Activated T-helper 1 cell treated with anti-CD3 and anti-CD28 coated beads, Interleukin-12 subunit alpha, Interleukin-12 subunit beta, Interleukin-2, Interleukin-4 antibody, amounts not matched to agents 30 ng/mL and 10 ng/mL and 1 ng/mL, durations not matched to agents 14 hours and 24 hours and 36 hours (primary cell): ENCODE measurements at regions of chr3 and their contacts with region 1.

Region 1: DNA sequence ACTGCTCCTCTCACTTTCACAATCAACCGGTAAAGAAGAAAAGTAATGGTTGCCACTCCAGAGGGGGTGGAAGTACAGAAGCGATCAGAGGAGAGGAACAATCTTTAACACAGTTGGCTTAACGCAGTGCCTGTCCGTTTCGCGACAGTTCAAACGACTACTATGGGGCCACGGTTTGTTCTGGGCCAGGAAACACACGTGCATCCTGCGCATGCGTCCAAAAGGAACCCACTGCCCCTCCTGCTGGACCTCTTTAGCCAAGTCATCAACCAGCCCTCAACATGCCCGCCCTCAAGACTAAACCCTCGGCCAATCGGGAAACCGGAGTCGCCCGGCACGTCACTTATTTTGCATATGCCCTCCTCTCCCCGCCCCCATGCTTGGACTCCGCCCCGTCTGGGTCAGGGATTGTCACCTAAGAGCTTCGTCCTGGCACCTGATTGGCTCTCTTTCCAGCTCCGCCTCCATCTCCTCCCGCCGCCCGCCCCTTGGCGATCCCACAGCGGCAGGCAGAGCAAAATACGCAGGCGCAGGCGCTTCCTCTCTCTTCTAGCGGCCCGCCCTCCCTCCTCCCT is 345 bp upstream of the CDV3 start:
- DNase-seq: peak; percentile 100
- H3K4me3 Mint-ChIP-seq: peak overlapping the region; percentile 84
- H3K27ac Mint-ChIP-seq: peak overlapping the region; percentile 98
- H3K4me1 Mint-ChIP-seq: peaks cover 60% of the 10 kb centered on the region
- H3K27me3 Mint-ChIP-seq: peaks cover 2% of the 10 kb centered on the region

Region 2: DNA sequence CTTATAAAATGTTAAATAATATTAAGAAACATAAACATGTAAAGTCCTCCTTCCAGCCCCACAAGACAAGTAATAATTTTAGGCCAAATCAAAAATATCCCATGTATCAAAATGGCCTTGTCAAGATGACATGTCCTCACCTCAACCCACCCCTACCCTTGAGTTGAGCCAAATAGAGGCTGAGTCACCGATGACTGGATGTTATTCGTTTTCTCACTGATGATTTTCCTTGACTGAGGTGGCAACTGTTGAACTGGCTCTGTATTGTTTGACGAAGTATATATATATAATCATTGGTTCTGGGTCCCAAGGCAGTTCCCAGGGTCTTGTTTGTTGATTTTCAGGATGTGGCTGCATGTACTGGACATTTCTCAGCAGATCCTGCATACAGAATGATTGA is 459.6 kb before region 1 on chr3:
- intact Hi-C with region 1: no loop called
- DNase-seq: no peak
- H3K4me3 Mint-ChIP-seq: no peak overlapping the region
- H3K27ac Mint-ChIP-seq: no peak overlapping the region
- H3K4me1 Mint-ChIP-seq: no peaks in the 10 kb centered on the region
- H3K27me3 Mint-ChIP-seq: peaks cover 7% of the 10 kb centered on the region

Region 3: GRCh38 chr3:133211449-133211848 is 361.7 kb before region 1 on chr3:
- intact Hi-C with region 1: loop called (anchors 5 kb)
- DNase-seq: no peak
- H3K4me3 Mint-ChIP-seq: no peak overlapping the region
- H3K27ac Mint-ChIP-seq: no peak overlapping the region
- H3K4me1 Mint-ChIP-seq: peaks cover 21% of the 10 kb centered on the region
- H3K27me3 Mint-ChIP-seq: no peaks in the 10 kb centered on the region

Region 4: DNA sequence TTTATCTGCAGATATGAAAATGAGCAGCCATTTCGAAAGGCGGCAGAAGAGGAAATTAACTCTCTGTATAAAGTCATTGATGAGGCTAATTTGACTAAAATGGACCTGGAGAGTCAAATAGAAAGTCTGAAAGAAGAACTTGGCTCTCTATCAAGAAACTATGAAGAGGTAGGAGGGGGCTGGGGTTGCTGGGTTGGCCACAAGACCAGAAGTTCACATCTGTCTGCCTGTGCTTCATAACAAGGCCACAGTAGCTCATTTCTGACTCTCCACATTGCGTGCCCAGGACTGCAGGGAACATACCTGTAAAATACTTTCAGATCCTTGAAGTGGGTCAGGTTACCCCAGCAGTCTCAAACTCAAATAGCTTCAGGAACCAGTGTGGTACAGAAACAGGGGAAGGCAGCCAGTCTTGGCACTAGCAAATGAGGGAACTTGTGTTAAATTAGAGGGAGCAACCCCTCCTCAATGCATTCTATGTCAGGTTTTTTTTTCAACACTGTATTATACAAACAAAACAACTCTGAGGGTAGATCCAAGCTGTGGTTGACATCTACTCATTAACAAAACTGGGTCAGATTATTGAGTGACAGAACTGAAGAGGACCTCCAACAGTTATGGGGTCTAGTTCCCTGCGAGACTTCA is 124.5 kb before region 1 on chr3:
- intact Hi-C with region 1: loop called (anchors 1 kb)
- DNase-seq: peak; percentile 22
- H3K4me3 Mint-ChIP-seq: peak overlapping the region; percentile 34
- H3K27ac Mint-ChIP-seq: peak overlapping the region; percentile 80
- H3K4me1 Mint-ChIP-seq: peaks cover 34% of the 10 kb centered on the region
- H3K27me3 Mint-ChIP-seq: peaks cover 2% of the 10 kb centered on the region

Region 5: DNA sequence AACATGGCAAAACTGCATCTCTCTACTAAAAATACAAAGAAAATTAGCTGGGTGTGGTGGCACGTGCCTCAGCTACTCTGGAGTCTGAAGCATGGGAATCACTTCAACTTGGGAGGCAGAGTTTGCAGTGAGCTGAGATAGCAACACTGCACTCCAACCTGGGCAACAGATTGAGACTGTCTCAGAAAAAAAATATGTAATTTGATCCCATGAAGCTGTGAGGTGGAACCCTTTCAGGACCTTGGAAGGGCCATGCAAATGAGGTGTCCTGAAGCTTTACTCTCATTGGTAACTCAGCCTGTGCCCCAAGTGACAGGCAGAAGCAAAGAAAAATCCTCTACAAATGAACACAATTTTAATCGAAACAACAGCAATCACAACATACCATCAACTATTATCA is 84.2 kb before region 1 on chr3:
- intact Hi-C with region 1: loop called (anchors 1 kb)
- DNase-seq: no peak
- H3K4me3 Mint-ChIP-seq: no peak overlapping the region
- H3K27ac Mint-ChIP-seq: no peak overlapping the region
- H3K4me1 Mint-ChIP-seq: peaks cover 48% of the 10 kb centered on the region
- H3K27me3 Mint-ChIP-seq: peaks cover 3% of the 10 kb centered on the region

Region 6: GRCh38 chr3:133583396-133583795 is 10.3 kb after region 1 on chr3:
- intact Hi-C with region 1: no loop called
- DNase-seq: no peak
- H3K4me3 Mint-ChIP-seq: no peak overlapping the region
- H3K27ac Mint-ChIP-seq: no peak overlapping the region
- H3K4me1 Mint-ChIP-seq: peaks cover 17% of the 10 kb centered on the region
- H3K27me3 Mint-ChIP-seq: no peaks in the 10 kb centered on the region

Region 7: GRCh38 chr3:133595341-133595740 is 22.2 kb after region 1 on chr3:
- intact Hi-C with region 1: loop called (anchors 1 kb)
- DNase-seq: no peak
- H3K4me3 Mint-ChIP-seq: peak overlapping the region; percentile 1
- H3K27ac Mint-ChIP-seq: peak overlapping the region; percentile 20
- H3K4me1 Mint-ChIP-seq: peaks cover 25% of the 10 kb centered on the region
- H3K27me3 Mint-ChIP-seq: no peaks in the 10 kb centered on the region

Region 8: DNA sequence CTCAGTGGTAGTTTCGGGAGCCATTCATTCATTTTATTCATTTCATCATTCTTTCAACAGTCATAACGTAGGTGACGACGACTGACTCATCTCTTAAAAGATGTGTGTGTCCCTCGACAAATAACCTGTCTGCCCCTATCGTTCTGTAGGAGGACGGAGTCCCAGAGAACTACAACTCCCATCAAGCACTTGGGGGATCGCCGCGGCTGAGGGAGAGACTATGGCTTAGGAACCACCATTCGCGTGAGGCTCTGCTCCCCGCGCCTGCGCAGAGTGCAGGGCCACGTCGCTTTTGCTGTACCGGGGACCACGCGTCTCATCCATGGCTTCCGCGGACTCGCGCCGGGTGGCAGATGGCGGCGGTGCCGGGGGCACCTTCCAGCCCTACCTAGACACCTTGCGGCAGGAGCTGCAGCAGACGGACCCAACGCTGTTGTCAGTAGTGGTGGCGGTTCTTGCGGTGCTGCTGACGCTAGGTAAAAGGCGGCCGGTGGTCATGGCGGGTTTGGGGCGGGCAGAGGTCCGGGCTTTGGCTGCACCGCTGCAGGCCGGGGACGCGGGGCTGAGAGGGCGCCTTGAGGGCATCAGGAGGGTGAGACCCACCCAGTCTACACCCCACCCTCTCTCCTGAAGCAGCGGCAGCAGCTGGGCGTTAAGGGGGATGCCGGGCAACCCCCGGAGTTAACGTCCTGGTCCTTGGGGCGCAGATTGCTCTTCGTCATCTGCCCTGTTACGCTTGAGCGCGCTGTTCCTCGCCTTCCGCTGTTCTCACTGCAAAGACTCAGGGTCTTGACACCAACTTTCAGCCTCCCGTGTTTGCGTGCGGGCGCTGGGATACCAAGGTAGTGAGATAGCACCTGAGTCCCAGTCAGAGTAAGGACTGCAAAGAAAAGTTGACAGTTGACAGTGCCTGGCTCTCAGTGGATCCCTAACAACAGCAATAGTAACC is 232.7 kb after region 1 on chr3 and contains the start of gene SRPRB:
- intact Hi-C with region 1: loop called (anchors 1 kb)
- DNase-seq: peak; percentile 95
- H3K4me3 Mint-ChIP-seq: peak within 1 kb of the TSS; percentile 99
- H3K27ac Mint-ChIP-seq: peak within 1 kb of the TSS; percentile 95
- H3K4me1 Mint-ChIP-seq: peaks cover 28% of the 10 kb centered on the region
- H3K27me3 Mint-ChIP-seq: peaks cover 7% of the 10 kb centered on the region
- total RNA-seq, gene SRPRB: 108 and 115 TPM in 2 replicates

Region 9: GRCh38 chr3:134485718-134486576 is 912.8 kb after region 1 on chr3 and contains the starts of genes ANAPC13 and CEP63:
- intact Hi-C with region 1: loop called (anchors 1 kb)
- DNase-seq: peak; percentile 87
- H3K4me3 Mint-ChIP-seq: peak within 1 kb of the TSS; percentile 92
- H3K27ac Mint-ChIP-seq: peak within 1 kb of the TSS; percentile 100
- H3K4me1 Mint-ChIP-seq: peaks cover 47% of the 10 kb centered on the region
- H3K27me3 Mint-ChIP-seq: peaks cover 3% of the 10 kb centered on the region
- total RNA-seq, gene ANAPC13: 25.2 and 26.8 TPM in 2 replicates
- total RNA-seq, gene CEP63: 20.0 and 22.2 TPM in 2 replicates